ENCODE measurements at regions of chr6 and their contacts with region 1.

Region 1: GRCh38 chr6:116279260-116280063 is at the start of gene TSPYL1:
- DNase-seq: peak; percentile 96
- H3K4me3 ChIP-seq: peak within 1 kb of the TSS; percentile 67 to 95 (median 76)
- H3K27ac ChIP-seq: peak within 1 kb of the TSS; percentile 95
- H3K4me1 ChIP-seq: peaks cover 11% of the 10 kb centered on the region
- H3K27me3 ChIP-seq: no peaks in the 10 kb centered on the region
- CTCF ChIP-seq: no peak
- total RNA-seq, gene TSPYL1: 103 to 167 TPM

Region 2: GRCh38 chr6:116111552-116112528 is 167.6 kb before region 1 on chr6:
- CTCF ChIA-PET with region 1: no interaction called
- dilution Hi-C with region 1: no loop called
- in situ Hi-C with region 1: no loop called
- intact Hi-C with region 1: loop called (anchors 10 kb)
- DNase-seq: peak; percentile 42
- H3K4me3 ChIP-seq: no peak overlapping the region
- H3K27ac ChIP-seq: no peak overlapping the region
- H3K4me1 ChIP-seq: peaks cover 3% of the 10 kb centered on the region
- H3K27me3 ChIP-seq: no peaks in the 10 kb centered on the region
- CTCF ChIP-seq: peak; percentile 76 to 80

Region 3: GRCh38 chr6:116405138-116405537 is 125.7 kb after region 1 on chr6:
- CTCF ChIA-PET with region 1: no interaction called
- dilution Hi-C with region 1: no loop called
- in situ Hi-C with region 1: loop called in 1 of 2 experiments (anchors 25 kb)
- intact Hi-C with region 1: loop called (anchors 2 kb)
- DNase-seq: no peak
- H3K4me3 ChIP-seq: no peak overlapping the region
- H3K27ac ChIP-seq: no peak overlapping the region
- H3K4me1 ChIP-seq: peaks cover 7% of the 10 kb centered on the region
- H3K27me3 ChIP-seq: no peaks in the 10 kb centered on the region
- CTCF ChIP-seq: no peak

Region 4: DNA sequence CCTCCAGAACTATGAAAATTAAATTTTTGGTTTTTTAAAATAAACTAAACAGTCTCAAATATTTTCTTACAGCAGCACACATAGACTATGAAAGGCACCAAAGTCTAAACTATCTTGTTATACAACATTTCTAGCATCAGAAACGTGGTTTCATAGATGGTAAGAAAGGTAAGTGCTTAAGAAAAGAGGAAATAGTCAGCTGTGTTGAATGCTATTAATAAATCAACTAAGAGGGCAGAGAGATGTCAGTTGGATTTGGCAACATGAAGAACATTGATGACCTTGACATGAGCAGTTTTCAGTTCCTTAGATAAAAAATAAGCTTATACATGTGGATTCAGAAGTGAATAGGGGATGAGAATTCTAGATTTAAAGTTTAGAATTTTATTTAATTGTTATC is 711.2 kb after region 1 on chr6:
- CTCF ChIA-PET with region 1: no interaction called
- dilution Hi-C with region 1: no loop called
- in situ Hi-C with region 1: no loop called
- intact Hi-C with region 1: no loop called
- DNase-seq: no peak
- H3K4me3 ChIP-seq: no peak overlapping the region
- H3K27ac ChIP-seq: no peak overlapping the region
- H3K4me1 ChIP-seq: no peaks in the 10 kb centered on the region
- H3K27me3 ChIP-seq: no peaks in the 10 kb centered on the region
- CTCF ChIP-seq: no peak